Caco-2 (cell line): ENCODE measurements at regions of chr2 and their contacts with region 1.

Region 1: DNA sequence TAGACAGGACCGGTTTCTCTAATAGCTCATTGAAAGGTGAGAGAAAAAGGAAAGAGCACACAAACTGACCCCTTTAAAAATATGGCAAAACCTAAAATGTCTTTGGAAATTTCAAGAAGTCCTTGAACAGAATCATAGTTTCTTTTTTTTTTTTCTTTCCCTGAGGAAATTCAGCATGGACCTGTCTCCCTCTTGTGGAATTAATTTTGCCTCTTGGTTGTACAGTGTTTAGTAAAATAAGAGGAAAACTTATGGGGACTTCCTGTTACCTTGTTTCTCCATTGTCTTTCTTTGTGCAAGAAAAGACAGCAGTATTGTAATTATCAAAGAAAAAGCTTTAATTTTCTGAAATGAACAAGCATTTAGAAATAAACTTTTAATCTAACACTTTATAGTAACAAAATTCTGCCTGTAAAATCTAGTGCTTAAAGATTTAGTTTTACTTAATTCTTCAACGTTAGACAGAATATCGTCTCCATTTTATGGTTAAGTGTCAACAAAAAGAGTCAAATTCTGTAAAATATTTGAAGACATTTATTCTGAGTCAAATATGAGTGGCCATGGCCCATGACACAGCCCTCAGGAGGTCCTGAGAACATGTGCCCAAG is 176.3 kb upstream of the NABP1 start:
- DNase-seq: peak in 1 of 2 experiments; percentile 34
- H3K4me3 ChIP-seq: no peak overlapping the region
- H3K4me3 Mint-ChIP-seq: no peak overlapping the region
- H3K27ac Mint-ChIP-seq: no peak overlapping the region
- H3K4me1 ChIP-seq: peaks cover 10% of the 10 kb centered on the region
- H3K4me1 Mint-ChIP-seq: no peaks in the 10 kb centered on the region
- H3K27me3 ChIP-seq: no peaks in the 10 kb centered on the region
- H3K27me3 Mint-ChIP-seq: no peaks in the 10 kb centered on the region
- CTCF ChIP-seq: peak; percentile 44 to 45

Region 2: GRCh38 chr2:191165176-191165643 is 336.5 kb before region 1 on chr2:
- CTCF ChIA-PET with region 1: interaction called, 3 read pairs
- POLR2A ChIA-PET with region 1: no interaction called
- intact Hi-C with region 1: loop called (anchors 1 kb)
- DNase-seq: peak in 1 of 2 experiments; percentile 40
- H3K4me3 ChIP-seq: no peak overlapping the region
- H3K4me3 Mint-ChIP-seq: no peak overlapping the region
- H3K27ac Mint-ChIP-seq: no peak overlapping the region
- H3K4me1 ChIP-seq: peaks cover 30% of the 10 kb centered on the region
- H3K4me1 Mint-ChIP-seq: peaks cover 24% of the 10 kb centered on the region
- H3K27me3 ChIP-seq: no peaks in the 10 kb centered on the region
- H3K27me3 Mint-ChIP-seq: peaks cover 4% of the 10 kb centered on the region
- CTCF ChIP-seq: peak; percentile 61 to 73

Region 3: DNA sequence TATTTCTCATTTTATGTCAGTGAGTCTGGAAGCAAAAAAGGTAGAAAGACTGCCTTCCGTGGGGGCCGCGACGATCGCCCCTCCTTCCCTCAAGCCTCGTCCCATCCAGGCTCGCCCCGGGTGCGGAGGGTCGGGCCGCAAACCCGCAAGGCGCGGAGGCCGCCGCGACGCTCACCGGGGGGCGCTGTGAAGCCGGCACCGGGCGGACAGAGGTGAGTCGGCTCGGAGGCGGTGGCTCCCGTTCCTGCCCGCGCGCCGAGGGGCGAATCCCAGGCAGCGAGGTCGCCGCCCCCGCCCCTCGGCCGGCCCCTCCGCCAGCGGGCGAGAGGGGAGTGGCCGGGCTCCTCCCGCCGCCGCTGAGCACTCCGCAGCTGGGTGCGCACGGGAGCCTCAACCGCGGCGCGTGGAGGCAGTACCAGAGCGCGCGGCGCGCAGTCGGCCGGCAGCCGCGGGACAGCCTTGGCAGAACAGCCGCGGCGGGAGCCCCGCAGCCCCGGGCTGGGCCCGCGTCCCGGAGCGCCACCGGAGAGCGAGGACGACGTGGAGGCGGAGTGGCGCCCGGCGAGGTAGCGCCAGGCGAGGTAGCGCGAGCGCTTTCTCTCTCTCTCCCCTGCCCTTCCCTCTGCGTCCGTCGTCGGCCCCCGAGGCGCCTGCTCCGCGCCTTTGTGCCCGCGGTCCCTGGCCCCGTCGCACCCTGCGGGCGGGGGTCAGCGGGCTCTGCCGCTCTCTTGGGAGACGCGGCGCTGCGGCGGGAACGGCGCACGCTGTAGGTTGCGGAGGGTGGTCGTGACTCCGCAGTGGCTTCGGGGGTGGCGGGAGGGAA is 256.4 kb before region 1 on chr2 and contains the start of gene MYO1B:
- CTCF ChIA-PET with region 1: no interaction called
- POLR2A ChIA-PET with region 1: no interaction called
- intact Hi-C with region 1: loop called (anchors 1 kb)
- DNase-seq: peak; percentile 89 to 96
- H3K4me3 ChIP-seq: peak within 1 kb of the TSS; percentile 85
- H3K4me3 Mint-ChIP-seq: peak within 1 kb of the TSS; percentile 94
- H3K27ac Mint-ChIP-seq: peak within 1 kb of the TSS; percentile 86
- H3K4me1 ChIP-seq: peaks cover 29% of the 10 kb centered on the region
- H3K4me1 Mint-ChIP-seq: peaks cover 27% of the 10 kb centered on the region
- H3K27me3 ChIP-seq: no peaks in the 10 kb centered on the region
- H3K27me3 Mint-ChIP-seq: no peaks in the 10 kb centered on the region
- CTCF ChIP-seq: peak; percentile 66 to 78
- total RNA-seq, gene MYO1B: 80.3 and 83.4 TPM in 2 replicates

Region 4: GRCh38 chr2:191352536-191352935 is 149.1 kb before region 1 on chr2:
- CTCF ChIA-PET with region 1: no interaction called
- POLR2A ChIA-PET with region 1: no interaction called
- intact Hi-C with region 1: loop called (anchors 1 kb)
- DNase-seq: no peak
- H3K4me3 ChIP-seq: no peak overlapping the region
- H3K4me3 Mint-ChIP-seq: no peak overlapping the region
- H3K27ac Mint-ChIP-seq: no peak overlapping the region
- H3K4me1 ChIP-seq: no peaks in the 10 kb centered on the region
- H3K4me1 Mint-ChIP-seq: no peaks in the 10 kb centered on the region
- H3K27me3 ChIP-seq: no peaks in the 10 kb centered on the region
- H3K27me3 Mint-ChIP-seq: no peaks in the 10 kb centered on the region
- CTCF ChIP-seq: no peak

Region 5: GRCh38 chr2:191382801-191383200 is 118.9 kb before region 1 on chr2:
- CTCF ChIA-PET with region 1: no interaction called
- POLR2A ChIA-PET with region 1: no interaction called
- intact Hi-C with region 1: loop called (anchors 1 kb)
- DNase-seq: peak; percentile 47 to 50
- H3K4me3 ChIP-seq: no peak overlapping the region
- H3K4me3 Mint-ChIP-seq: no peak overlapping the region
- H3K27ac Mint-ChIP-seq: no peak overlapping the region
- H3K4me1 ChIP-seq: peaks cover 17% of the 10 kb centered on the region
- H3K4me1 Mint-ChIP-seq: peaks cover 18% of the 10 kb centered on the region
- H3K27me3 ChIP-seq: no peaks in the 10 kb centered on the region
- H3K27me3 Mint-ChIP-seq: no peaks in the 10 kb centered on the region
- CTCF ChIP-seq: no peak

Region 6: DNA sequence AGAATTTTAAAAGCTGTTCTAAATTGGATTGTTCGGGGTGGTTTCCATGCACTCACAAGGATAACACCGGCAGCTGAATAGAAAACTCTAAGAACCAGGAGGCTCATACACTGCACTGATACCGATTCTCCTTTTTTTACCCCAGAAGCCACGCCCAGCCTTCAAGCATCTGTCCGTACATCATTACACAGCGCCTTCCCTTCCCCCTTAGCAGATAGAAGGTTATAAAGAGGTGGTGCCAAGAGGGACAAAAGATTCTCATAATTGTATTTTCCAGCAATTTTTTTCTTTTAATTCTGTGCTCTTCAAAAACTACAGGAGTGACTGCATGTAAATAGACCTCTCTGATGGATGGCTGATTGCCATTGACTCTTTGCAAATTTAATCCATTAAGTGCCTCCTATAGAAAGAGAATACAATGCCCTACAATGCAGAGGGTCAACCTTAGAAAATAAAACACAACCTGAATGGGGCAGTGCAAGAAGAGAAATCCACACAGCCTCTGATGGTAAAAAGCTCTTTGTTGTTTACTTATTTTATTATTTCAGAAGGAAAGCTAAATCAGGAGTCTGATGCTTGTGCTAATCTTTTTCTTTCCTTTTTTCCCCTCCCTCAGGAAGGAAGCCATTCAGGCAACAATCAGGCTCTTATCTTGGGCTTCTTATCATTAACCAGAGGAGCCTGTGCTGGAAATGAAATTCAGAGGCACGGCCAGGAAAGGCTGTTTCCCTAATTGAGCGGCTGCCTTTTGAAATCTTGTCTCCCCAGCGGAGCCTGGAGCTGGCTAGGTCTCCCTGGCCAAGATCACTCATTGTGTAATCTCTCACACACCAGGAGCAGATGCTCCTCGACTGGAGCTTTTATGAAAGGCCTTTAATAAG is 22.6 kb before region 1 on chr2:
- CTCF ChIA-PET with region 1: interaction called, 6 read pairs
- POLR2A ChIA-PET with region 1: no interaction called
- intact Hi-C with region 1: loop called (anchors 2 kb)
- DNase-seq: peak; percentile 71 to 87
- H3K4me3 ChIP-seq: no peak overlapping the region
- H3K4me3 Mint-ChIP-seq: no peak overlapping the region
- H3K27ac Mint-ChIP-seq: no peak overlapping the region
- H3K4me1 ChIP-seq: peaks cover 24% of the 10 kb centered on the region
- H3K4me1 Mint-ChIP-seq: peaks cover 23% of the 10 kb centered on the region
- H3K27me3 ChIP-seq: no peaks in the 10 kb centered on the region
- H3K27me3 Mint-ChIP-seq: no peaks in the 10 kb centered on the region
- CTCF ChIP-seq: no peak

Region 7: DNA sequence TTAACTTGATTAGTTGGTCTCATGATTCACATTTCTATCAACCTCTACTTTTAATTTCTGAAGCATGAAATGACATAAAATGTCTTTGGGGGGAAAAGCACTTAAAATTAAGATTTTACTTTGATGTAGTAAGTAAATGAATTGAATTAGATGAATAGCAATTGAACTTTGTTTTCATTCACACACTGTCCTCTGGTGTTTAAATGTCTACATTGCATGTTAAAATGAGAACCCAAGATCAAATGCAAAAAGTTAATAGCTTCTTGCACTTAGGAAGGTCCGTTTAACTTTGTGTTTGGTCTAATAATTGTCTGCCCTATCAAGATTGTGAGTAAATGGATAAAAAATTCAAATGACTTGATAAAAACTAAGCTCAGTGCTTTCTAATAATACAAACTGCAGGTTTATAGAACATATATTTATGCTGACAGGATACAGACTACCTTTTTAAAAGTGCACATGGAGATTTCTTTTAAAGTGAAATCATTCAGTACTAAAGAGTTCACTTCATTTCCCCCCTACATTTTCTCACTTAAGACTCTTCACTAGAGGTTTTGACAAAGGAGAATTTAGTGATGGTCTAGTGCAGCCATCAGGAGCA is 20.0 kb after region 1 on chr2:
- CTCF ChIA-PET with region 1: no interaction called
- POLR2A ChIA-PET with region 1: no interaction called
- intact Hi-C with region 1: no loop called
- DNase-seq: peak in 1 of 2 experiments; percentile 15
- H3K4me3 ChIP-seq: no peak overlapping the region
- H3K4me3 Mint-ChIP-seq: no peak overlapping the region
- H3K27ac Mint-ChIP-seq: no peak overlapping the region
- H3K4me1 ChIP-seq: no peaks in the 10 kb centered on the region
- H3K4me1 Mint-ChIP-seq: peaks cover 13% of the 10 kb centered on the region
- H3K27me3 ChIP-seq: no peaks in the 10 kb centered on the region
- H3K27me3 Mint-ChIP-seq: no peaks in the 10 kb centered on the region
- CTCF ChIP-seq: peak; percentile 62 to 74

Region 8: GRCh38 chr2:191555092-191555742 is 53.6 kb after region 1 on chr2:
- CTCF ChIA-PET with region 1: no interaction called
- POLR2A ChIA-PET with region 1: no interaction called
- intact Hi-C with region 1: no loop called
- DNase-seq: peak; percentile 86 to 92
- H3K4me3 ChIP-seq: no peak overlapping the region
- H3K4me3 Mint-ChIP-seq: peak overlapping the region; percentile 49
- H3K27ac Mint-ChIP-seq: peak overlapping the region; percentile 29
- H3K4me1 ChIP-seq: peaks cover 7% of the 10 kb centered on the region
- H3K4me1 Mint-ChIP-seq: peaks cover 29% of the 10 kb centered on the region
- H3K27me3 ChIP-seq: no peaks in the 10 kb centered on the region
- H3K27me3 Mint-ChIP-seq: no peaks in the 10 kb centered on the region
- CTCF ChIP-seq: peak; percentile 72 to 84